ENCODE measurements at regions of chr3 and their contacts with region 1.

Region 1: DNA sequence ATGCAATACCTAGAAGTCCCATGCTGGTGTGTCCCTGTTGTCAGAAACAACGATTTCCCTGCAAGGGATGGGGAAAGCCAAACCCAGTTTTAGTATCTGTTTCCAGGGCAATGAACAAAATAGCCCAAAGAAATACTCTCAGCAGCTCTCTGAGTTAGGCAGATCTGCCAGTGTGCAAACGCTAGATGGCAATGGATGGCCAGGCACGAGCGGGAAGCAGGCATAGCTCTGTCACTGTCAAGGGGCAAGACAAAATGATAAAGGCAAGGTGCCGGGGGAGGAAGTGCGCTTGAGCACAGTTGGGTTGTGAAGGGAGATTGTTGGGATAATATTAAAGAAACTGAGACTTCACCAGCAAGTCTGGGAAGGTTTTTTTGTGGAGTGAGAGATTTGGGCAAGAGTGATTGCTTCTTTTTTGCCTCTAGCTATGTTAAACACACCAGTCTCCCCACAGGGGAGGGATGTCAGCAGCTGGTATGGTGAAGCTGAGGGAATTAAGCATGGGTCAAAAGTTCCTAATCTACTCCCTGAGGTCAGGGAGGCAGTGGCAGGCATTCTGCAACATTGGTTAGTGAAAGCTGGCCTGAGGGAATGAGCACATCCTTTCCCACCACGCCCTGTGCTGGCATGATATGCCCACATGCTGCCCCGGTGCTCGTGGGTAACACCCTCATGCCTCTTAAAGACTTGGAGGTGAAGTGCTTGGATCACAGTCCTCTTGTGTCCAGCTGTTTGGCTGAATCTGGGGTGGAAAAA is 117.5 kb downstream of the PDCD6IP start:
- DNase-seq: peak; percentile 92
- H3K4me3 ChIP-seq: no peak overlapping the region
- H3K27ac ChIP-seq: peak overlapping the region; percentile 97
- H3K4me1 ChIP-seq: peaks cover 65% of the 10 kb centered on the region
- H3K27me3 ChIP-seq: no peaks in the 10 kb centered on the region
- CTCF ChIP-seq: peak; percentile 76

Region 2: GRCh38 chr3:33883538-33883950 is 32.4 kb before region 1 on chr3:
- CTCF ChIA-PET with region 1: interaction called, 11 read pairs
- POLR2A ChIA-PET with region 1: no interaction called
- intact Hi-C with region 1: no loop called
- DNase-seq: peak; percentile 85
- H3K4me3 ChIP-seq: peak overlapping the region; percentile 15
- H3K27ac ChIP-seq: peak overlapping the region; percentile 81
- H3K4me1 ChIP-seq: peaks cover 29% of the 10 kb centered on the region
- H3K27me3 ChIP-seq: no peaks in the 10 kb centered on the region
- CTCF ChIP-seq: peak; percentile 87

Region 3: GRCh38 chr3:33954956-33955355 is 39.0 kb after region 1 on chr3:
- CTCF ChIA-PET with region 1: no interaction called
- POLR2A ChIA-PET with region 1: interaction called, 11 read pairs
- intact Hi-C with region 1: loop called (anchors 1 kb)
- DNase-seq: peak; percentile 80
- H3K4me3 ChIP-seq: no peak overlapping the region
- H3K27ac ChIP-seq: peak overlapping the region; percentile 98
- H3K4me1 ChIP-seq: peaks cover 55% of the 10 kb centered on the region
- H3K27me3 ChIP-seq: no peaks in the 10 kb centered on the region
- CTCF ChIP-seq: peak; percentile 66

Region 4: DNA sequence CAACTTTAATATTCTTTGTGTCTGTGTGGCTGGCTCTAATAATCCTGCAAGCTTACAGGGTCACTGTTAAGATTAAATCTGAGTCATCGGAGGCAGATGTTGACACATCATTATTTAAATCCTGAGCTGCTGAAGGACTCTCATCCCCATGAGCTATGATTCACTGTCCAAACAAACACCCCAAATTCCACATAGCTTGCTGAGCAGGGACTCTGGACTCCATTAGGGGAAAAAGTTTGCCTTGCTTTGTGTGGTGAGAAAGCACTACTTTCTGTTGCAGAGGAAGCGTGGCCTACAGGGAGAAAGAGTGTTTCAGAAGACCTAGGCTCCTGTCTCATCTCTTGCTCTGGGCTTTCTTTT is 96.1 kb after region 1 on chr3:
- CTCF ChIA-PET with region 1: interaction called, 5 read pairs
- POLR2A ChIA-PET with region 1: interaction called, 18 read pairs
- intact Hi-C with region 1: loop called (anchors 2 kb)
- DNase-seq: peak; percentile 87
- H3K4me3 ChIP-seq: no peak overlapping the region
- H3K27ac ChIP-seq: peak overlapping the region; percentile 85
- H3K4me1 ChIP-seq: peaks cover 76% of the 10 kb centered on the region
- H3K27me3 ChIP-seq: no peaks in the 10 kb centered on the region
- CTCF ChIP-seq: no peak

Region 5: DNA sequence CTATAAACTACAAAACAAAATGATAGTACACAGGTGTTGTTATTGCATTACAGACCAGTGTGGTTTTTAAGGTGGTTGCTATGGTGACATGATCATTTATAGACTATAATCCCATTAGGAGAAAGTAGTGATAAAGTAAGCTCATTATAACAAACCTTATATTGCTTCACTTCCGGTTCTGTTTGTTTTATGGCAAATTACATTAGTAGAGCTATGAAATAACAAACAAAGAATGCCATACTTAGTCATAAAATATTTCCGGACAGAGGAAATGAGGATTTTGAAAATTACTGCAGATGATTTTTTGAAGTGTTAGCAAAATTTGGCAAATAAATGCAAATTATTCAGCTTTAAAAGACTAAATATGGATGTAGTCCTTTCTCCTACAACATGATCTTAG is 1082.9 kb after region 1 on chr3:
- CTCF ChIA-PET with region 1: no interaction called
- POLR2A ChIA-PET with region 1: no interaction called
- intact Hi-C with region 1: loop called (anchors 2 kb)
- DNase-seq: peak; percentile 94
- H3K4me3 ChIP-seq: no peak overlapping the region
- H3K27ac ChIP-seq: peak overlapping the region; percentile 97
- H3K4me1 ChIP-seq: peaks cover 76% of the 10 kb centered on the region
- H3K27me3 ChIP-seq: no peaks in the 10 kb centered on the region
- CTCF ChIP-seq: no peak

Measured in A673 (cell line).